ENCODE measurements at regions of chr5 and their contacts with region 1.

Region 1: GRCh38 chr5:82295144-82295543 is 17.0 kb upstream of the RPS23 start:
- DNase-seq: peak in 2 of 4 experiments; percentile 30 to 36
- ATAC-seq: peak; percentile 46; the same call in 1 of the 3 replicates
- H3K4me3 ChIP-seq: no peak overlapping the region
- H3K27ac ChIP-seq: no peak overlapping the region
- H3K4me1 ChIP-seq: peaks cover under 1 to 2% of the 10 kb centered on the region in 2 experiments; a peak in 1 of 5 replicates
- H3K27me3 ChIP-seq: no peaks in the 10 kb centered on the region
- CTCF ChIP-seq: no peak
- EP300 ChIP-seq: no peak
- POLR2A ChIP-seq: no peak
- RAD21 ChIP-seq: no peak

Region 2: GRCh38 chr5:82174128-82174918 is 120.8 kb before region 1 on chr5:
- CTCF ChIA-PET with region 1: no interaction called
- POLR2A ChIA-PET with region 1: no interaction called
- in situ Hi-C with region 1: no loop called
- intact Hi-C with region 1: loop called (anchors 2 kb)
- DNase-seq: peak; percentile 58 to 86 (median 66)
- ATAC-seq: peak; percentile 99
- H3K4me3 ChIP-seq: no peak overlapping the region
- H3K27ac ChIP-seq: no peak overlapping the region
- H3K4me1 ChIP-seq: no peaks in the 10 kb centered on the region; a peak in 1 of 5 replicates
- H3K27me3 ChIP-seq: no peaks in the 10 kb centered on the region
- CTCF ChIP-seq: peak; percentile 69 to 83 (median 81)
- EP300 ChIP-seq: no peak
- POLR2A ChIP-seq: no peak
- RAD21 ChIP-seq: peak; percentile 50 to 73

Region 3: GRCh38 chr5:82234883-82235282 is 60.3 kb before region 1 on chr5:
- CTCF ChIA-PET with region 1: no interaction called
- POLR2A ChIA-PET with region 1: no interaction called
- in situ Hi-C with region 1: no loop called
- intact Hi-C with region 1: loop called (anchors 5 kb)
- DNase-seq: no peak
- ATAC-seq: peak; percentile 33; the same call in 1 of the 3 replicates
- H3K4me3 ChIP-seq: no peak overlapping the region
- H3K27ac ChIP-seq: no peak overlapping the region
- H3K4me1 ChIP-seq: no peaks in the 10 kb centered on the region
- H3K27me3 ChIP-seq: no peaks in the 10 kb centered on the region
- CTCF ChIP-seq: no peak
- EP300 ChIP-seq: no peak
- POLR2A ChIP-seq: no peak
- RAD21 ChIP-seq: no peak

Region 4: GRCh38 chr5:82278095-82278918 is 16.8 kb before region 1 on chr5 and contains the start of gene RPS23:
- CTCF ChIA-PET with region 1: no interaction called
- POLR2A ChIA-PET with region 1: interaction called, 12 read pairs
- in situ Hi-C with region 1: no loop called
- intact Hi-C with region 1: no loop called
- DNase-seq: peak; percentile 83 to 96 (median 88)
- ATAC-seq: peak; percentile 84
- H3K4me3 ChIP-seq: peak within 1 kb of the TSS; percentile 79
- H3K27ac ChIP-seq: peak within 1 kb of the TSS; percentile 93
- H3K4me1 ChIP-seq: peaks cover 23 to 25% of the 10 kb centered on the region in 2 experiments; a peak in 4 of 5 replicates
- H3K27me3 ChIP-seq: no peaks in the 10 kb centered on the region
- CTCF ChIP-seq: no peak
- EP300 ChIP-seq: no peak
- POLR2A ChIP-seq: peak; percentile 97
- RAD21 ChIP-seq: no peak
- polyA plus RNA-seq, gene RPS23: 5,181 to 6,445 TPM

Measured in K562 (cell line).